Dendritic cell treated with granulocyte-macrophage colony-stimulating factor and Interleukin-4, amounts not matched to agents 40 ng/mL and 50 ng/mL, for 4 days (primary cell): ENCODE measurements at regions of chr4 and their contacts with region 1.

Region 1: GRCh38 chr4:2800691-2801596 is 8.1 kb downstream of the SH3BP2 start:
- H3K4me3 Mint-ChIP-seq: peak overlapping the region; percentile 86
- H3K27ac Mint-ChIP-seq: peak overlapping the region; percentile 94
- H3K4me1 Mint-ChIP-seq: peaks cover 96% of the 10 kb centered on the region
- H3K27me3 Mint-ChIP-seq: no peaks in the 10 kb centered on the region

Region 2: GRCh38 chr4:2761035-2761923 is 39.7 kb before region 1 on chr4:
- intact Hi-C with region 1: loop called (anchors 5 kb)
- H3K4me3 Mint-ChIP-seq: no peak overlapping the region
- H3K27ac Mint-ChIP-seq: peak overlapping the region; percentile 20
- H3K4me1 Mint-ChIP-seq: peaks cover 32% of the 10 kb centered on the region
- H3K27me3 Mint-ChIP-seq: peaks cover 18% of the 10 kb centered on the region

Region 3: DNA sequence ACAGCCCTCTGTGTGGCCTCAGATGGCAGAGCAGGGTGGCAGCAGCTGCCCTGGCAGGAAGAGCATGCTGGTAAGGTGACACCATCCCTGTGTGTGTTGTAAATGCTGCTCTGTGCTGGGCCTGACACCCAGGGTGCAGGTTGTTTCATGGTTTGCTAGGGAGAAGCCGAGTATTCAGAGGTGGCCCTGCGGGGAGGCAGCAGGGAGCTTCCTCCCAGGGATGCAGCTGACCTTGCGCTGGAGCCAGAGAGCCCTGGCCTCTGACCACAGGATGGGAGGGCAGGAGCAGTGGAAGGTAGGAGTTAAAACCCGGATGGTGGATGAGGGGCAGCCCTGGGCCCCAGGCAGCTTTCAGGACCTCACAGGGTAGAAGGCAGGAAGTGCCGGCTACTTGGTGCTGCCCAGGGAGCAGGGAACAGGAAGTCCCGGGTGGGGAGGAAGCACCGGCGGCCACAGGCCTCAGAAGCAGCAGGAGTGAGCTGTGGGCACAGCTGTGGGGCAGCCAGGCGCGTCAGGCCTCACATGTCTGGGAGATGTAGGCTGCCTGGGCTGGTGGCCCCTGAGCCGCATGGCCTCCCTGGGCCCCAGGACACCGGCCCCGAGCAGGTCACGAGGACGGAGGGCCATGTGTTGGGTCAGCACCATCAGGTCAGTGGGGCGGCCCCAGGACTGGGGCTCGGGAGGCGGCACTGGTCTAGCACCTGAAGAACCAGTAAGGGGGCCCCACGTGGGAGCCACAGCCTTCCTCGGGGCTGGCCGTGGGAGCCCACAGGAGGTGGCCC is 11.1 kb after region 1 on chr4:
- intact Hi-C with region 1: loop called (anchors 1 kb)
- H3K4me3 Mint-ChIP-seq: peak overlapping the region; percentile 75
- H3K27ac Mint-ChIP-seq: peak overlapping the region; percentile 82
- H3K4me1 Mint-ChIP-seq: peaks cover 93% of the 10 kb centered on the region
- H3K27me3 Mint-ChIP-seq: no peaks in the 10 kb centered on the region

Region 4: DNA sequence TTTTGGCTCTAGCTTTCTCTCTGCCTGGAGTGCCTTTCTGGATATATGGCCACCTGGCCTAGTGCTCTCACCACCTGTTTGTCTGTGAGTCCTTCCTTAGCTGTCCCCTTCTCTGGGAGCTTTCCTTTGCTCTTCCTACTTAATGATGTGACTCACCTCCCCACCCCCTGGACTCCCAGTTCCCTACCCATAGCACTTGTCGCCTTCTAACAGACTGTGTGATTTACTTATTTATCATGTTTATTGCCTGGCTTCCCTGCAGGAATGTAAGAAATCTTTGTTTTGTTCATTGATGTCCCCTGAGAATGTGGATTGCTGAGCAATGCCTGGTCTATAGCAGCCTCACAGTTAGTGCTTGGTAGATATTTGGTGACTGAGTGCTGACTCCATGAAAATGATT is 61.6 kb after region 1 on chr4:
- intact Hi-C with region 1: no loop called
- H3K4me3 Mint-ChIP-seq: no peak overlapping the region
- H3K27ac Mint-ChIP-seq: peak overlapping the region; percentile 66
- H3K4me1 Mint-ChIP-seq: peaks cover 82% of the 10 kb centered on the region
- H3K27me3 Mint-ChIP-seq: no peaks in the 10 kb centered on the region

Region 5: DNA sequence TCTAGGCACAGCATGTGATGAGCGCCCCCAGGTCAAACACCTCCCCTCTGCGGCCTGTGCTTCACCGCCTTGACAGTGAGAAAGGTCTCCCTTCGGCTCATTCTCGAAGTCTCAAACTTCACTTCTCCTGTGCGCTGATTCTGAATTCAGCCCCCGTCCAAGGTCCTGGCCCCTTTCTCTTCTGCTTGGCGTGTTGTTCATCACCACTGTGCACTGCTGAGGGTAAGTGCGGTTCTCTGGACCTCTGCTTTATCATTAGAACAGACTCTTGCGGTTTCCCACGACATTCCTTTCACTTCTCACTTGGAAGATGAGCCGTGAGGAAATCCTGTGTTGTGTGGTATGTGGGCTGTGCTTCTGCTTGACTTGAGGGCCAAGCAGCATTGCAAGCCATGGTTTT is 261.5 kb after region 1 on chr4:
- intact Hi-C with region 1: no loop called
- H3K4me3 Mint-ChIP-seq: peak overlapping the region; percentile 30
- H3K27ac Mint-ChIP-seq: no peak overlapping the region
- H3K4me1 Mint-ChIP-seq: peaks cover 57% of the 10 kb centered on the region
- H3K27me3 Mint-ChIP-seq: peaks cover 27% of the 10 kb centered on the region